Heart left ventricle (tissue), 16 donors: ENCODE measurements at regions of chr4 and their contacts with region 1.

Region 1: DNA sequence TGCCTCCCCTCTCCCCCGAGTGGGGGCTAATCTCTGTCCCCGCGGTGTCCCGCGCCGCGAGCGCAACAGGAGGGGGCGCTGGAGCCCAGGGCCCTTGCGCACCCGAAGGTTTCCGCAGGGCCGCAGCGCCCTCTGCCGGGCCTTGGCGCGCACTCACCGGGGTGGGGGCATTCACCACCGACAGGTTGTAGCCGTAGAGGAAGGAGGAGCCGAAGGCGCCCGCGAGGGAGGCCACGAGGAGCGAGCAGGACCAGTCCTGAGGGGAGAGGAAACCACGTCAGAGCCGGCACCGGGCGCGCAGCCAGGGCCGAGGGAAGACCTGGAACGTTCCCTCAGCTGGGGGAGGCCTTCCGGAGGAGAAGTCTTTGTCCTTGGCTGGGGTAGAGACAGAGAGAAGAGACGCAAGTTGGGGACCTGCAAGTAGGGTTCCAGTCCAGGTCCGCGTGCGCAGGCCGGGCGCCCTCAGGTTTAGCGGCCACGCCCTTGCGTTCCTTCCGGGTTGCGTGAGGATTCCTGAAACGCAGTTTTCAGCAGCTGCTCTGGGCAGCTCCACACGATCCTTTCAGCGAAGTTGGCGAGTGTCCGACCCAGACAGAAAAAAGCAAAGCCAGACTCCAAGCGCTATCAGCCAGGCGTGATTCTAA is 2.4 kb downstream of the SLC2A9 start:
- DNase-seq: peak; percentile 99
- ATAC-seq: peak; percentile 93 to 96 (median 96)
- H3K4me3 ChIP-seq: peak overlapping the region in 10 of 12 donors; percentile 38 to 61 (median 50)
- H3K27ac ChIP-seq: peak overlapping the region; percentile 84 to 95 (median 93)
- H3K4me1 ChIP-seq: peaks cover 5 to 57% (median 39%) of the 10 kb centered on the region in 12 donors
- H3K27me3 ChIP-seq: no peaks in the 10 kb centered on the region
- CTCF ChIP-seq: peak; percentile 96 to 100 (median 99)
- POLR2A ChIP-seq: peak; percentile 7 to 60

Region 2: GRCh38 chr4:9691238-9692065 is 327.5 kb before region 1 on chr4:
- intact Hi-C with region 1: loop called in 4 of 10 experiments (anchors 2 to 5 kb)
- DNase-seq: peak; percentile 96 to 98 (median 97)
- ATAC-seq: peak; percentile 100
- H3K4me3 ChIP-seq: peak overlapping the region; percentile 30 to 74 (median 65)
- H3K27ac ChIP-seq: peak overlapping the region; percentile 53 to 85 (median 72)
- H3K4me1 ChIP-seq: peaks cover 0 to 7% (median 2%) of the 10 kb centered on the region in 12 donors
- H3K27me3 ChIP-seq: no peaks in the 10 kb centered on the region
- CTCF ChIP-seq: no peak
- POLR2A ChIP-seq: no peak

Region 3: DNA sequence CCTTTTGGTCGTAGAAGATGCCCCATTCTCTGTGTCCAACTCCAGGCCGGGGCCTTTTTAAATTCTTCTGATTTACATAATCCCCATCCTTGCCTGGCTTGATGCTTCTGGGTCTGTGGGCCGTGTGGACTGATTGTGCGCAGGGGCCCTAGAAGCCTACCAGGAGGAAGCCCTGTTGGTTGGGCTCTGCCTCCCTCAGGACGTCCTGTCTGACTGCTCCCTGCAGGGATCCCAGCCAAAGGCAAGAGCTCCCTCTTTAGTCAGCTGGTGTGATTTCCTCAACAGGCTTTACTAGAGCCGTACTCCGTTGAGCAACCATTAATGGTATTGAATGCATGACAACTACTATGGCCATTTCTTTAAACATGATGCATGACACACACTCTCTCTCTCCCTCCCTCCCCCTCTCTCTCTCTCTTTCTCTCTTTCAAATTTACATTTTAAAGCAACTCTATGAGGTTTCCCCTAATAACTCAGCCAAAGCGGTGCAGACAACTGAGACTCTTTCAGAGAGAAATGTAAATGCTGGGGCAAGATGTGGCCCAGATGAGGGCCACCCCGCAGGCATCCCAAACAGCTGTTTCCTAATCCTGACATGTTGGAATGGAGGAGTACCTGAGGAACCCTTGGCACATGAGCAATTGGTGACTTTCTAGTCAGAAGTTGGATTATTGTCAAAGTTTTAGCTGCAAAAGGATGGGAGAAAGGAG is 120.2 kb before region 1 on chr4:
- intact Hi-C with region 1: loop called in 7 of 10 experiments (anchors 2 to 10 kb)
- DNase-seq: peak in 4 of 5 donors; percentile 56 to 80 (median 74)
- ATAC-seq: peak; percentile 89 to 92 (median 91)
- H3K4me3 ChIP-seq: no peak overlapping the region
- H3K27ac ChIP-seq: no peak overlapping the region
- H3K4me1 ChIP-seq: peaks cover 0 to 14% (median 1%) of the 10 kb centered on the region in 12 donors
- H3K27me3 ChIP-seq: no peaks in the 10 kb centered on the region
- CTCF ChIP-seq: peak; percentile 21 to 70 (median 48)
- POLR2A ChIP-seq: no peak

Region 4: DNA sequence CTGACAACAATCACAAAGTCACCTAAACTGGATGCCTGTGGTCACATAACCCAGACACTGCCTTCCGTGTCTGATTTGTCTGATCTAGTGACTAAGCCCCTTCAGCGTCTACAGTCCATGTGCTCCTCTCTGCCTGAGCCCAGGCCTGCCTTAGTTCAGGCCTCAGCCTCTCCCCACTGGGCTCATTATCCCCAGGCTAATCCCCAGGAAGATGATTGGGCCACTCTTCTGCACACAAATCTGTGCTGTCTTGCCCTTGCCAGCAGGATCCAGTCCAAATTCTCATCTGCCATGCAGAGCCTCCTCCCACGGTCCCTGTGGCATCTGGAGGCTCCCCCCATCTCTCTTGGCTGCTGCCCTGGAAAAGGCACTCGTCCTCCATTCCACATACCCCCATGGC is 94.2 kb before region 1 on chr4:
- intact Hi-C with region 1: loop called in 3 of 10 experiments (anchors 5 kb)
- DNase-seq: no peak
- ATAC-seq: peak; percentile 14 to 44 (median 32)
- H3K4me3 ChIP-seq: no peak overlapping the region
- H3K27ac ChIP-seq: no peak overlapping the region
- H3K4me1 ChIP-seq: peaks cover 0 to 13% (median 0%) of the 10 kb centered on the region in 12 donors
- H3K27me3 ChIP-seq: no peaks in the 10 kb centered on the region
- CTCF ChIP-seq: no peak
- POLR2A ChIP-seq: no peak

Region 5: GRCh38 chr4:10116580-10117358 is 97.8 kb after region 1 on chr4 and contains the start of gene WDR1:
- intact Hi-C with region 1: loop called in 5 of 10 experiments (anchors 2 to 10 kb)
- DNase-seq: peak; percentile 97 to 99 (median 98)
- ATAC-seq: peak; percentile 95 to 98 (median 96)
- H3K4me3 ChIP-seq: peak within 1 kb of the TSS; percentile 63 to 89 (median 78)
- H3K27ac ChIP-seq: peak within 1 kb of the TSS; percentile 85 to 99 (median 96)
- H3K4me1 ChIP-seq: peaks cover 0 to 54% (median 39%) of the 10 kb centered on the region in 12 donors
- H3K27me3 ChIP-seq: no peaks in the 10 kb centered on the region
- CTCF ChIP-seq: no peak
- POLR2A ChIP-seq: peak; percentile 92 to 99
- total RNA-seq, gene WDR1: 113 to 299 (median 185) TPM

Region 6: GRCh38 chr4:10942156-10942555 is 923.2 kb after region 1 on chr4:
- intact Hi-C with region 1: no loop called
- DNase-seq: no peak
- ATAC-seq: no peak
- H3K4me3 ChIP-seq: no peak overlapping the region
- H3K27ac ChIP-seq: no peak overlapping the region
- H3K4me1 ChIP-seq: no peaks in the 10 kb centered on the region
- H3K27me3 ChIP-seq: no peaks in the 10 kb centered on the region
- CTCF ChIP-seq: no peak
- POLR2A ChIP-seq: no peak